ENCODE measurements at regions of chr10 and their contacts with region 1.

Region 1: DNA sequence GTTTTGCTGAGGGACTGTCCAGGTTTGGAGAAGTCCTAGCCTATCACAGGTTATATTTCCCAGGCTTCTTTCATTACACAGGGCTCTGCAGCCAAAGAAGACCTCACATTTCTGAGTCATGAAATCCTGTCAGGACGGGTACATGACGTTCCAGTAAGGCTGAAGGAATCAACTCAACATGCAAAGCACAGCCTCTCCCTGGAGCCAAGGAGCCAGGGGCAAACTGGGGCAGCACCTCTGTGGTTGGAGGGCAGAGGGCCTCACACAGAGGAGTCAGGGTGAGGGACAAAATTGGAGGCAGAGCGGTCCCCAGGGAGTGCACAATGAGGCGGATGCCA is 116.3 kb upstream of the GDF10 start:
- DNase-seq: no peak
- ATAC-seq: no peak
- H3K4me3 Mint-ChIP-seq: no peak overlapping the region
- H3K27ac Mint-ChIP-seq: no peak overlapping the region
- H3K4me1 Mint-ChIP-seq: no peaks in the 10 kb centered on the region
- H3K27me3 Mint-ChIP-seq: no peaks in the 10 kb centered on the region

Region 2: DNA sequence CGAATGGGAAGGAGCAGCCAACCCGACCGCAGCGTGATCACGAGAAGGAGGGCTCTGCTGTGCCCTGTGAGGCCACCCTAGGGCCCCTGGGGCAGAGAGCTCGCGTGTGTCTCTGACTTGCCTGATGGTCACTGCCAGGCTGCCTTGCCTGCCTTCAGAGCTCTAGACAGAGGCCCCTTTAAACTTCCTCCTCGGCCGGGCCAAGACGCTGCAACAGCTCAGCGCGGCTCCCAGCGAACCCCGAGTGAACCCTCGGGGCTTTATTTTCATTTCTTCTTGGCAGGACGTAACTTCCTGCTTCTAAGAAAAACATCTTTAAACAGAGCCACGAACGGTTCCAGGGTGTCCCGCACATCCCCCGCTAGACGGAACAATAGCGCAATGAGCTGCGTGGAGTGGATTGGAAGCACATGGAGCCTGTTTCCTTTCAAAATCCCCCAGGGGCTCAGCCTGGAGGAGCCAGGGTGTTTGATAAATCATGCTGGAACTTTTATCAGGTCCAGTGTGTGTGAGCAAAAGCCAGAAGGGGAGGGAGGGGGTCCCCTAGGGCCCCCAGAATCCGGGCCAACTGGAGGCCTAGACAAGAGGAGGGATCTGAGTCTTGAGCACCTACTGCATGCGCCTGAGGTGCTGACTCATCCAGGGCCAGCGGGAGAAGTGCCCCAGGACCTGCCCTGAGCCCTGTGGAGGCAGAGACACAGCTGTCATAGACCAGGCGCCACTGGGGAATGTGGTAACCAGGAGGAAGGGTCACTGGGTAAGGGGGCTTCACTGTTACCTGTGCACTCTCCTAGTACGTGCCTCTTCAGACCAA is 17.8 kb before region 1 on chr10:
- CTCF ChIA-PET with region 1: interaction called, 3 read pairs
- POLR2A ChIA-PET with region 1: no interaction called
- intact Hi-C with region 1: loop called in 1 of 2 experiments (anchors 2 kb)
- DNase-seq: peak; percentile 55
- ATAC-seq: peak; percentile 65
- H3K4me3 Mint-ChIP-seq: peak overlapping the region; percentile 62
- H3K27ac Mint-ChIP-seq: peak overlapping the region; percentile 87
- H3K4me1 Mint-ChIP-seq: peaks cover 33% of the 10 kb centered on the region
- H3K27me3 Mint-ChIP-seq: peaks cover under 1% of the 10 kb centered on the region

Measured in activated CD4-positive, alpha-beta T cell treated with anti-CD3 and anti-CD28 coated beads for 36 hours (primary cell).